ENCODE measurements at regions of chr12 and their contacts with region 1.

Region 1: GRCh38 chr12:12432364-12432763 is 75.5 kb downstream of the BORCS5 start:
- DNase-seq: peak; percentile 95
- ATAC-seq: peak; percentile 42
- H3K4me3 ChIP-seq: no peak overlapping the region
- H3K27ac ChIP-seq: peak overlapping the region; percentile 95
- H3K4me1 ChIP-seq: peaks cover 56% of the 10 kb centered on the region
- H3K27me3 ChIP-seq: no peaks in the 10 kb centered on the region
- CTCF ChIP-seq: no peak

Region 2: DNA sequence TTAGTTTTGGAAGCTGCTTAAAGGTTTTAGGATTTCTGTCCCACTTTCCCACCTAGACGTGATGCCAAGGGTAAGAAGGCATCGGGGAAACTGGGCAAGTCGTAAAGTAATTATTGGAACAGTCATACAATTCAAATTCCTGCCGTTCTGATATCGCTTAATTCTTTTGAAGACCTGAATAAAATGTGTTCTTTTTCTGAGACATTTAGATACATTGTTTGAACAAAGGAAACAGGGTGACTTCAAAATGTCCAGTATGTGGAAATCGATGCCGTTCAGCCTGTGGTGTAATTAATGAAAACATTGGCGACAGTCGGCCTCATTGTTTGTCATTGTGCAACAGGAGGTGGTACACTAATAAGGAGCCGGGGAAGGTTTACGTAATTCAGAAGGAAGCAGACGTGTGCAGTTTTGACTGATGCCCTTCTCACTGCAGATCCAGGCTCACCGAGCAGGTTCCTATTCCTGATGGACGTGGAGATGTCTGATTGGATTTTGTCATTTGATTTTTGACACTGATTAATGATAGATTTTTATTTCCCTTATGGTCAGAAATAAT is 17.2 kb after region 1 on chr12:
- CTCF ChIA-PET with region 1: interaction called, 16 read pairs
- POLR2A ChIA-PET with region 1: no interaction called
- intact Hi-C with region 1: loop called (anchors 2 kb)
- DNase-seq: peak; percentile 46
- ATAC-seq: no peak
- H3K4me3 ChIP-seq: no peak overlapping the region
- H3K27ac ChIP-seq: peak overlapping the region; percentile 61
- H3K4me1 ChIP-seq: peaks cover 22% of the 10 kb centered on the region
- H3K27me3 ChIP-seq: no peaks in the 10 kb centered on the region
- CTCF ChIP-seq: no peak

Region 3: GRCh38 chr12:12616512-12617310 is 184.3 kb after region 1 on chr12:
- CTCF ChIA-PET with region 1: no interaction called
- POLR2A ChIA-PET with region 1: no interaction called
- intact Hi-C with region 1: no loop called
- DNase-seq: peak; percentile 1
- ATAC-seq: no peak
- H3K4me3 ChIP-seq: no peak overlapping the region
- H3K27ac ChIP-seq: no peak overlapping the region
- H3K4me1 ChIP-seq: peaks cover 6% of the 10 kb centered on the region; the same call in 1 of the 2 replicates
- H3K27me3 ChIP-seq: no peaks in the 10 kb centered on the region
- CTCF ChIP-seq: no peak